Activated naive CD4-positive, alpha-beta T cell treated with anti-CD3 and anti-CD28 coated beads, Interleukin-2, amount 10 ng/mL, durations not matched to agents 7 days and 5 days (primary cell): ENCODE measurements at regions of chr2 and their contacts with region 1.

Region 1: DNA sequence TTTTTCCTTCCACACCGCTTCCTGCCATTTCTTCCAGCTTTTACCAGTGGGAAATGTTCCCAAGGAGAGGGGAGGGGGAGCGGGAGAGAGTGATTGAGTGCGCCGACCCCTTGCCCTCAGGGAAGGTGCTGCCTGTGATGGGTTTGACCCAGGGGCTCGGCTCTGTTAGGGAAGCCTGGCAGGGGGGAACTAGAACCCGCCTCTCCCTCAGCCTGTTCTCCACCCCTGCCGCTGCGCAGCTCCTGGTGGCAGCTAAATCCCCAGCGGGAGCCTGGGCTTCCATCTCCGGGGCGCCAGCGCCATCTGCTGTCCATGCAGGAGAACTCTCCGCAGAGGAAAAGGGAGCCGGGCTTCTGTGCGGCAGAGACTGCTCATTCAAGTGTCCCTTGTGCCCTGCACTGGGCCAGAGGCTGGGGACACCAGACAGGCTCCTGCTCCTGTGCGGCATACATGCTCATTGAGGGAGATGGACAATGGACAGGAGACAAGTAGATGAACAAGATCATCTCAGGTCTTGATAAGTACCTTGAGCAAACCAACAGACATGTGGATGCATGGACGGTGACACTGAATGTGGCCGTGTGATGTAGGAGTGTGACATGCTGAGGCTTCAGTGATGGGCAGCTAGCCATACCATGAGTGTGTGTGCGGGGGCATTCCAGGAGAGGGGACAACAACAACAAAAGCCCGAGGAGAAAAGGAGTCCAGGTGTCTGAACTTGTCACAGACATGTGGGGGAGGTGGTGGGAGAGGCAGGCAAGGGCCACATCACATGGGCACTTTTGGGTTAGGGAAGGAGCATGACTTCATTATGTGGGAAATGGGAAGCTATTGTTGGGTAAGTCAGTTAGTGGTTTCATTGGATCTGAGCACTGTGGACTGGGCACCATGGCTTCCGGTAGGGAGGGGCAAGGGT is 13.3 kb downstream of the CHPF start:
- DNase-seq: peak; percentile 88
- H3K4me3 Mint-ChIP-seq: no peak overlapping the region
- H3K27ac Mint-ChIP-seq: no peak overlapping the region
- H3K4me1 Mint-ChIP-seq: no peaks in the 10 kb centered on the region
- H3K27me3 Mint-ChIP-seq: peaks cover 70% of the 10 kb centered on the region

Region 2: DNA sequence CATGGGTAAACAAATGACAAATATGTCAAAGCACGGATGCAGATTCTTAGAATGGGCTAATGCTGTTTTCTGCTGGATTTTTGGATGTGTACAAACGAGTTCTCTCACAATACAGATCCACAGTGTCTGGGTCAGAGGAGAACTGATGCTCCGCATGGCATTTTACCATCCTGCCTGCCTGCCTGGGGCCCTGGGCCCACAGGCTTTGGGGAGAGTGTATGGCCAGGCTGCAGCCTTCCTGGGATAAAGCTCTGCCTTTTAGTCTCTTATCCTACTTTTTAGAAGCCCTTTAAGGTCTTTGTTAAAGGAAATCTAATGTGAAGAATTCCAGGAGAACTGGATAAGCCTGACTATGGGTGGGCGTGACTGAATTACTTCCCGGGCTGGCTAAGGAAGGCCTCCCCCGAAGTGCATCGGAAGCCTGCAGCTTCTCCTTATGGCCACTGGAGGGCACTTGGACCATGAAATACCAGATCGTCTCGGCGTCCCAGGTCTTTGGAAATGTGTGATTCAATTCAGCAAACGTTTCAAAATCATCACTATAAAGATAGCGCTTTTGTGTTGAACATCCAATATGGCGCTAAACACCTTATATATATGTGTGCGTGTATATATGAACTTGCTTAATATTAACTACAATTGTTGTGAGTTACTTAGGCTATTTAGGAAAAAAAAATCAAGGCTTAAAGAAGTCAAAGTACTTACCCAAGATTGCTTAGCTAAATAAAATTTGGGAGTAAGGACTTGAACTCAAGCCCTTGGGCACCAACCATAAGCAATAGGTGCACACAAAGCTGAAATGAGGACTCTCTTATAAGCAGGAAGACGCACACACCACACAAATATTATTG is 127.4 kb before region 1 on chr2:
- CTCF ChIA-PET with region 1: interaction called, 126 read pairs
- DNase-seq: peak; percentile 67
- H3K4me3 Mint-ChIP-seq: no peak overlapping the region
- H3K27ac Mint-ChIP-seq: no peak overlapping the region
- H3K4me1 Mint-ChIP-seq: no peaks in the 10 kb centered on the region
- H3K27me3 Mint-ChIP-seq: peaks cover 40% of the 10 kb centered on the region

Region 3: DNA sequence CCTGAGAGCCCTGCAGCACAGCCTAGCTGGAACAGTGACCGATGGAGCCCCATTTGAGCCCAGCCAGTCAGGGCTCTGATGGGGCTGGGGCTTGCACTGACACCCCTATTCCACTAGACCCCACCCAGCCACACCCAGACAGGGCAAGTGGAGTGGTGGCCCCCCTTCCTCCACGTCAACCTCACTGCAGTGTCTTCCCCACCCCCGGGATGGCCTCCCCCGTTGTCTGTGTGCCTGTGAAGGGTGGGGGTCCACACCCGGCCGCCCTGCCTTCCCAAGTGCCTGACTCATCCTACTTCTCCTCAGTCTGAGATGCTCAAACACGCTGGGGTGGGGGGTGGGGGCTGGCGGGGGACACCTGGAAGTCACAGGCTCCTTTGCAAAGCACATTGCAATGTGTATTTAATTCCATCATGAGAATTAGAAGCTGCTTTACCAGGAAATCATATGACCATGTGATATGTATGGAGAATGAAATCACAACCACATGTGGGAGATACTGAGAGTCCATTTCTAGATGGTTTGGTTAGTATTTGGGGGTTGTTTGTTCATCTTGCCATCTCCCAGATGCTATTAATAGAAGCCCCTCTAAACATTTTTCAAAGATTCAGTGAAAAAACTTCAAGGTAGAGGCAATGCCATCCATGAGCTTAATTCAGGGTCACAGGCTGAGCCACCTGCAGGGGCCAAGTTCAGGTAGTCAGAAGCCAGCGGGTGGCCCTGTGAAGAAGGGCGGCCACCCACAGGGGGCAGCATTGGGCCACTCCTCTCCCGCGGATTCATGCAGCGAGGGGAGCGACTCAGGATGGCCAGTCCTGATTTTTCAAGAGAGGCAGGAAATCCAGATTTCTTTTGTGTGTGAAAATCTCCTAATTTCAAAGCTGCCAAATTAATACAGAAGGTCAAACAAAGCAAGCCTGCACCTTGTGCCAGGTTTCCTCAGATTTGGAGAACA is 54.3 kb before region 1 on chr2:
- CTCF ChIA-PET with region 1: interaction called, 66 read pairs
- DNase-seq: peak; percentile 77
- H3K4me3 Mint-ChIP-seq: no peak overlapping the region
- H3K27ac Mint-ChIP-seq: no peak overlapping the region
- H3K4me1 Mint-ChIP-seq: peaks cover 4% of the 10 kb centered on the region
- H3K27me3 Mint-ChIP-seq: peaks cover 40% of the 10 kb centered on the region

Region 4: DNA sequence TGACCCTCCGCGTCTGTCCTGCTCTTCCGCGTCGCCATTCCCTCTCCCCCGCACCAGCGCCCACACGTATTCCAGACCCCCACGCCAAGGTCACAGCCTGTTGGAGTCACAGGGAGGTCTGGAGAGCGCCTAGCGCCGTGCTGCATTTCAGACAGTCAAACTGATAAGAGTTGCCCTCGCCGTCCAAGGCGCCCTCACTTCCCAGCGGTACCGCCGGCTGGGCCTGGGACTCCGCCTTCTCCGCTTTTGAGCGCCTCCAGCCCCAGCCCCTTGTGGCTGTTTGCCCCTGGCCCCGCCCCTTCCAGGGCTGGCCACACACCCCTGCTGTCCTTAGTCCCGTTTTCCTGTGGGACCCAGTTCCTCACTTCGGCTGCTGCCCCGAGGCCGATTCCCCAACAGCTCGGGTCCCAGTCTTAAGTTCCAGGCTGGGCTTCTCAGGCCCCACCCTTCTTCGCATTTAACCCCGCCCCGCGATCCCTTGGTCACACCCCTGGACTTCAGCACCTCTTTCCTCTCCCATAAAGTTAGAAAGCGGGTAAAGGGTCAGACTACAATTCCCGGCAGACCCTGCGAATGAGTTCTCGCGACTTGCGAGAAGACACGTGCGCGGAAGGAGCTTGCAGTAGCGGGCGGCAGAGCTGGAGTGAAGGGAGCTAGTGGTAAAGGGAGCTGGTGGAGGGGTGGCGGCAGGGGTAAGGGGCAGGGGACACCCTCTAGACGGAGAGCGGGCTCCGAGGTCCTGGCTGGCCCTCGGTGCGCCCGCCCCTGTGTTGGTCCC is 31.8 kb before region 1 on chr2 and contains the start of gene GMPPA:
- CTCF ChIA-PET with region 1: interaction called, 131 read pairs
- DNase-seq: peak; percentile 98
- H3K4me3 Mint-ChIP-seq: peak within 1 kb of the TSS; percentile 92
- H3K27ac Mint-ChIP-seq: peak within 1 kb of the TSS; percentile 73
- H3K4me1 Mint-ChIP-seq: peaks cover 41% of the 10 kb centered on the region
- H3K27me3 Mint-ChIP-seq: peaks cover 53% of the 10 kb centered on the region

Region 5: DNA sequence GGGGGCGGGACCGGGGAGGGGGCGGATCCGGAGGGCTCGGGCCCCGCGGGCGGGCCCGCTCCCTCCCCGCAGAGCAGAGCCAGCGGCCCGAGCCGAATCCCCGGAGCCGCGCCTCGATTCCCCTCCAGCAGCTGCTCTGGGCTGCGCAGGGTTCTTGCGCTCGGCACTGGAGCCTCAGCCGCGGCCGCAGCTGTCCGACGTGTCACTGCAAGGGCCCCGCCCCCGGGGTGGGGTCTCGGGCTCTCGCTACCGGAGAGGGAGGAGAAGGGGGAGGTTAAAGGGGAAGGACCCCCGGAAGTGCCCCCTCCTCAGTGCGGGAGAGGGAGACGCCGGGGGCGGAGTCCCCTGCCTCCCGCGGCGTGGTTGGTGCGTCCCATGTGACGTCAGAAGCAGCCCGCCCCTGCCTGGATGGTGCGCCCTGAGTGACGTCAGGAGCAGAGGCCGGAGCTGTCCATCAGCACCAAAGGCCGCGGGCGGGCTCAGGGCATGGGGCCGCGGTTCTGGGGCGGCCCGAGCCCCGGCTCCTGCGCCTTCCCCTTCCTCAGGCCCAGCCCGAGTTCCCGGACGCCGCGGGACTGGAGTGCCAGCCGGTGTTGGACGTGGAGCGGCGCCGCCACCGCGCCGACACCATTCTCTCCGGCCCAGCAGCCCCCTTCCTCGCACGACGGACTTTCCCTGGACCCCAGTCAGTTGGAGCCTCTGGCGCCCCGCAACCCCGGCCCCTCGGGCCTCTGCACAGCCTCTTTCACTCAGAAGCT is 13.5 kb after region 1 on chr2 and contains the starts of genes CHPF and TMEM198:
- CTCF ChIA-PET with region 1: interaction called, 17 read pairs
- DNase-seq: peak; percentile 97
- H3K4me3 Mint-ChIP-seq: peak within 1 kb of the TSS; percentile 77
- H3K27ac Mint-ChIP-seq: peak within 1 kb of the TSS; percentile 86
- H3K4me1 Mint-ChIP-seq: peaks cover 23% of the 10 kb centered on the region
- H3K27me3 Mint-ChIP-seq: peaks cover 36% of the 10 kb centered on the region

Region 6: GRCh38 chr2:219567131-219567530 is 36.8 kb after region 1 on chr2:
- CTCF ChIA-PET with region 1: no interaction called
- DNase-seq: no peak
- H3K4me3 Mint-ChIP-seq: no peak overlapping the region
- H3K27ac Mint-ChIP-seq: no peak overlapping the region
- H3K4me1 Mint-ChIP-seq: peaks cover 3% of the 10 kb centered on the region
- H3K27me3 Mint-ChIP-seq: peaks cover 66% of the 10 kb centered on the region

Region 7: DNA sequence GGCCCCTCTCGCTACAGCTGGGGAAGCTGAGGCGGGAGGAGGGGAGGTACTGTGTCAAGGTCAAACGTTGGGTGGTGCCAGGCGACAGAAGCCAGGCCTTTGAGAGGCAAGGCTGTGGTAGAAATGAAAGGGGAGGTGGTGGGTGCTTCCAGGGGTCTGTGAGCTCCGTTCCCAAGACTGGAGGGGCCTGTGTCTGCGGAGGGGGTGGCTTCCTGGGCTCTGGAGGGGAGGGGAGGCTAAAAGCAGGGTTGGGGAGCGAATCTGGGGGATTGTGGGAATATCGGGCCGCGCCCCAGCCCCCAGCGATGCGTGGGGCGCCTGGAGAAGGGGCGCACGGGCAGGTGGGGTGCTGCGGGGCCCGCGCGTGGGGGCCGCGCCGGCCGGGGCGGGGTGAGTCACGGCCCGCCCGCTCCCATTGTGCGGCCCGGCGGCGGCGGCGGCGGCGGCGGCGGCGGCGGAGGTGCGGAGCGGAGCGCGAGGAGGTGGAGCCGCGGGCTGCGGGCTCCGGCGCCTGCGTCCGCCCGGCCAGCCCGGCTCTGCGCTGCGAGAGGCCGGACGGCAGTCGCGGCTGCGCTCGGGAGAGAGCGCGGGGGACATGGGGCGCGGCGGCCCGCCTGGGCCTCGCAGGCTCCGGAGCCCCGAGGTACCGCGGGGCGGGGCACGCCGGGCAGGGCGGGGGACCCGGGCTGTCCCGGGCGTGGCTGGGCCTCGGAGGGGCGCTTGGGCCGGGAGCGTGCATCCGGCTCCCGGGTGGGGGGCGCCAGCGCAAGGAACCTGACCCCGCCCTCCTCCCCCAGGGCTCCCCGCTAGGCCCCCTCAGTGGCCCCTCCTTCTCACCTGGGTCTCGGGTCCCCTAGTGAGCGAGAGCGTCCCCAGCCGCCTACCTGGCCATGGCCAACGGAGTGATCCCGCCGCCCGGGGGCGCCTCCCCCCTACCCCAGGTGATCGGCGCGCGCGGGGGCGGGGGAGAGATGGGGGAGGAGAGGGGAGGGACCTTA is 97.1 kb after region 1 on chr2 and contains the start of gene SLC4A3:
- CTCF ChIA-PET with region 1: no interaction called
- DNase-seq: peak; percentile 29
- H3K4me3 Mint-ChIP-seq: peak within 1 kb of the TSS; percentile 66
- H3K27ac Mint-ChIP-seq: no peak within 1 kb of the TSS
- H3K4me1 Mint-ChIP-seq: peaks cover 5% of the 10 kb centered on the region
- H3K27me3 Mint-ChIP-seq: peaks cover 71% of the 10 kb centered on the region